HEK293 (cell line): ENCODE measurements at regions of chr9 and their contacts with region 1.

Region 1: DNA sequence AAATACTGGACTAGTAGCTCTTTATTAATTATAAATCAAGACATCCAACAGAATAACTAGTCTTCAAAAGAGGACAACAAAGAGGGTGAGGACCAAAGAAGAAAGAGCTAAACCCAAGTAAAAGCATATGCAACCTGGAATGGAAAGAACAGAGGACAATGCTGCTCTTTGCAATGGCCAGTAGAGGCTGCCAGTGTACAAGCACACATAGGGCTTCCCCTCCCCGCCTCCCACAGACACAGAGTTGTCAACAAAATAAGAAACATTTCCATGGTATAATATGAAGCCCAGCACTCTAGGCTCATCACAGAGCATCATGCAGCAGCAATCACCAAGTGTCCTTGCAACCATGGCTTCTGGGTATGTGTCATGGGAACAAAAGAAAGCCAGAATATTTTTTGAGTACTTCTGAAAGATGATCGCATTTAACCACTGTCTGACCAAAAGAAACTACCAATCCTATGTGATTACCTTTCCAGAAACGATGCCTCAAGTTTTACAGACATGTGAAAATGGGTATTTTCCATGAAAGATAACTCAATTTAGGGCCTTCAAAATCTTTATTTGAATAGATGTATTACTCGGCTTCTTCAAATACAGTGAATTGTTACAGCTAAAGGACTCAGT is 58.1 kb downstream of the RFX3 start:
- H3K4me3 ChIP-seq: no peak overlapping the region
- H3K27ac ChIP-seq: no peak overlapping the region
- H3K4me1 ChIP-seq: peaks cover 4% of the 10 kb centered on the region; the same call in 1 of the 2 replicates
- CTCF ChIP-seq: peak; percentile 54; the same call in 1 of the 2 replicates

Region 2: DNA sequence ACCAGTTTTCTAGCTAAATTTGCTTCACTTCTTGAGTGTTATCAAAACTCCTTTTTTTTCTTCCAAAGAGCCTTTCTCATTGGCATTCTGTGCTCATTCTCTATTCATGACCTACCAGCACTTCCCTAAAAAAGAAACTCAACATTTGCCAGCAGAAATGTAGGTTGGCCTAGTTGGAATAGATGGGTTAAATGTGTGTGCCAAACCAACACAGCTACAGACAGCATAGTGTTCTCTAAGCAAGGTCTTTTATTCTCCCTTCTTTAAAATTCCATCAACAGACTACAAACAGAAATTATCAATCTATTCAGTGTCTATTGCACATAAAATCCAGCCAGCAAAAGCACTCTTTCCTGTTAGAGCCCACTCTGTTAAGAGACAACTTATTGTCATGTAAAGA is 368.1 kb before region 1 on chr9:
- CTCF ChIA-PET with region 1: no interaction called
- POLR2A ChIA-PET with region 1: no interaction called
- H3K4me3 ChIP-seq: no peak overlapping the region
- H3K27ac ChIP-seq: no peak overlapping the region
- H3K4me1 ChIP-seq: no peaks in the 10 kb centered on the region
- CTCF ChIP-seq: no peak

Region 3: DNA sequence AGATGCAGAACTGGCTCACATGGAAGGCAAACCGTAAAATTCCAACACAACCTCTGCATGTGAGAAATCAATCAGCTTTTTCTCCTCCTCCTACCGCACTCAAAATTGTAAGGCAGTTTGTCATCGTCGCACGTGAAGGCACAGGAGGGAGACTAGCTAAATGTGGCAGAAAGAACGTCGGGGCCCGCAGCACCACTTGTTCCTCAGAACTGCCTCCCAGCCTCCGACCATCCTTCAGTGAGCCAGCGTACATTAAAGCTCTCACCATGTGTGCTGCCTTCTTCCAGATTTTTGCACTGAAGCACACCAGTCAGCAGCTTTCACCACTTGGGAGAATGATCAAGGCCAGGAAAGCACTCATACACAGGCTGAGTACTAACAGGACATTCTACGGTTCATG is 47.8 kb before region 1 on chr9:
- CTCF ChIA-PET with region 1: no interaction called
- POLR2A ChIA-PET with region 1: no interaction called
- H3K4me3 ChIP-seq: no peak overlapping the region
- H3K27ac ChIP-seq: no peak overlapping the region
- H3K4me1 ChIP-seq: no peaks in the 10 kb centered on the region
- CTCF ChIP-seq: no peak

Region 4: DNA sequence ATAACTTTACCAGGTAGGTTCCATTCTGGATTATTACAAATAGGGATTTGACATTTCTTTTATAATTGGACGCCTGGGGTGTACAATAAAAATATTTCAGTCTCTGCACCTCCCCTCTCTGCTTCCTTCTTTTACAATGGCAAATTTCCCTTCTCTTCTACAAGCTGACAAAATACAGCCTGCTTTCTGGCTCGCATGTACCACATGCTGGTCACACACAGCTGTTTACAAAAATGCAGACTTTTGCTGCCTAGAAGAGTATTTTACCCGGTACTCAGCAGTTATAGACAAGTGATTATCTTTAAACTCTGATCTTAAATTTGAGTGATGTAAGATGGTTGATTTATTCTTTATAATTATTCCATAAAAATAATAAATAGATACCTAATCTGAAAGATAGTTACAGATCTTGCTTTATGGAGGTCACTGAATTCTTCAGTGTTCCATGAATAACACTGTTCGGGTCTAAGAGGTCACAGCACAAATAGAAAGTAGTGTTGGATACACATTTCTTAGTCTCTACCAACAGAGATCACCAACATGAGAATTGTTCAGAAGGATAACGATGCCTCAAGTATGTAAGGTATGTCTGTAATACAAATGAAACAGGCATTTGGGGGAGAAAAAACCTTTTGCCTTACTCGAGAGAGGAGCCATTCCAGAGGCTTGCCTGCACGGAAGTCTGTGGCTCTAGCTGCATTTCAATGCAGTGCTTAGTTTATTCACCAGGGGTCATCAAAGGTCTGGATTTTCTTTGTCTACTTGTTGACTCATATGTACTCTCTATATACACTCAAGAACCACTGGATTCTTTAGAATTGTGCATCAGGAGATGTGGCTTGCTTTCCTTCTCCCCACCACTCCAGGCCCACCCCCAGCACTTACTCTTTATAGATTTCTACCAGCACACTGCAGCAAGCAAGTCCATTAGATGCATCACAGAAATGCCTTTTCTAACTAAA is 264.7 kb after region 1 on chr9:
- CTCF ChIA-PET with region 1: interaction called, 14 read pairs
- POLR2A ChIA-PET with region 1: no interaction called
- H3K4me3 ChIP-seq: no peak overlapping the region
- H3K27ac ChIP-seq: no peak overlapping the region
- H3K4me1 ChIP-seq: no peaks in the 10 kb centered on the region
- CTCF ChIP-seq: peak; percentile 28; the same call in 1 of the 2 replicates